WTC11 (cell line): ENCODE measurements at regions of chr7 and their contacts with region 1.

Region 1: GRCh38 chr7:132580717-132581285 is 4.5 kb upstream of the PLXNA4 start:
- DNase-seq: peak; percentile 78
- ATAC-seq: peak; percentile 71
- H3K4me3 Mint-ChIP-seq: no peak overlapping the region
- H3K27ac Mint-ChIP-seq: no peak overlapping the region
- H3K4me1 Mint-ChIP-seq: peaks cover 13% of the 10 kb centered on the region
- H3K27me3 Mint-ChIP-seq: peaks cover 39% of the 10 kb centered on the region
- CTCF ChIP-seq: peak; percentile 68

Region 2: GRCh38 chr7:132318352-132319318 is 262.2 kb before region 1 on chr7:
- CTCF ChIA-PET with region 1: interaction called, 35 read pairs
- POLR2A ChIA-PET with region 1: no interaction called
- DNase-seq: peak; percentile 87
- ATAC-seq: peak; percentile 95
- H3K4me3 Mint-ChIP-seq: peak overlapping the region; percentile 62
- H3K27ac Mint-ChIP-seq: no peak overlapping the region
- H3K4me1 Mint-ChIP-seq: peaks cover 17% of the 10 kb centered on the region
- H3K27me3 Mint-ChIP-seq: peaks cover 11% of the 10 kb centered on the region
- CTCF ChIP-seq: peak; percentile 73

Region 3: GRCh38 chr7:132422502-132423111 is 158.2 kb before region 1 on chr7:
- CTCF ChIA-PET with region 1: no interaction called
- POLR2A ChIA-PET with region 1: no interaction called
- DNase-seq: no peak
- ATAC-seq: no peak
- H3K4me3 Mint-ChIP-seq: no peak overlapping the region
- H3K27ac Mint-ChIP-seq: no peak overlapping the region
- H3K4me1 Mint-ChIP-seq: peaks cover 19% of the 10 kb centered on the region
- H3K27me3 Mint-ChIP-seq: no peaks in the 10 kb centered on the region
- CTCF ChIP-seq: no peak

Region 4: GRCh38 chr7:132475669-132476116 is 105.1 kb before region 1 on chr7:
- CTCF ChIA-PET with region 1: interaction called, 10 read pairs
- POLR2A ChIA-PET with region 1: no interaction called
- DNase-seq: no peak
- ATAC-seq: peak; percentile 67
- H3K4me3 Mint-ChIP-seq: peak overlapping the region; percentile 45
- H3K27ac Mint-ChIP-seq: no peak overlapping the region
- H3K4me1 Mint-ChIP-seq: peaks cover 47% of the 10 kb centered on the region
- H3K27me3 Mint-ChIP-seq: peaks cover 4% of the 10 kb centered on the region
- CTCF ChIP-seq: no peak

Region 5: DNA sequence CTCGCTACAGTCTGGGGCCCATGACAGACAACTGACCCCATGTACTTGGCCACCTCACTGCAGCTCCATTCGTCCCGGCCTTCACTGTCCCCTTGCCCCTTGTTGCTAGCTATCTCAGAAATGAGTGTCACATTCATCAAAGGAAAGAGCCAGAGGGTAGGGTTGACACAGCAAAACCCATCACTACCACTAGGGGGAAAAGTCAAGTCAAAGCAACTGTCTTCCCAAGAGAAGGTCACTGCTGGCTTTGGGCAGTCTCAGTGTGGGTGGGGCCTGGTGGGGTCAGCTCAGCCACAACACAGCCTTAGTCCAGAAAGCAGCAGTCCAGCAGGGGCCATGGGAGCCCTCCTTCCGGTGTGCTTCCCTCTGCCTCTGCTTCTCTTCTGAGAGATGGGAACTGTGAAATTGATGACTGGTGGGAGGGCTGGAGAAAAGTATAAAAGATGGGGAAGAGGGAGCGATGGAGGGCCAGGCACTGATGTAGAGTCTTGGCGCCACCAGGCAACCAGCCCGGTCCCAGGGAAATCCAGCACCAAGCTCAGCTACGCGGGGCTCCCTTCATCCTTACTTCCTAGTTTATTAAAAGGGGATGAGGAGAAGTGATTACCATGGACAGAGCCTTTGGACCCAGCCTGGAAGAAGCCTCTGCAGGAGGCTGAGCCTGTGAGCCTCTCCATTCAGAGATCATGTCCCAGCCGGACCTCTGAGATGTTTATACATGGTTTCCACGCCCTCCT is 62.5 kb before region 1 on chr7:
- CTCF ChIA-PET with region 1: interaction called, 27 read pairs
- POLR2A ChIA-PET with region 1: no interaction called
- DNase-seq: peak; percentile 52
- ATAC-seq: peak; percentile 97
- H3K4me3 Mint-ChIP-seq: no peak overlapping the region
- H3K27ac Mint-ChIP-seq: no peak overlapping the region
- H3K4me1 Mint-ChIP-seq: peaks cover 10% of the 10 kb centered on the region
- H3K27me3 Mint-ChIP-seq: no peaks in the 10 kb centered on the region
- CTCF ChIP-seq: peak; percentile 70

Region 6: DNA sequence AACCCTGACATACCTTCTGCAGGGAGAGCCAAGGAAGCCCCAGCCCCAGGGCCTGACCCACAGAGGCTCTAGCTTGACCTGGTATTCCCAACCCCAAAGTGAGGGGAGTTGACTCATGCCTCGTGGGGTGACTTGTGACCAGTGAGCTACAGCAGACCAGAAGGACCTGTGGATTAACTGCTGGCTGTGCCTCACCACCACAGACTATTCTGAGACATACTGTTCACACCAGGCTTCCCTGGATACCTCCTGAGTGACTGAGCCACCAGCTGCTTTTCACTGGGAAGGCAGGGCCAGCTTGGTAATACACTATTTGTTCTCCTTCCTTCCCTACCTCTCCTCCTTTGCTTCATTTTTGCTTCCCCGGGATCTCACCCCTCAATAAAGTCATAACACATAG is 11.8 kb before region 1 on chr7:
- CTCF ChIA-PET with region 1: interaction called, 12 read pairs
- POLR2A ChIA-PET with region 1: no interaction called
- DNase-seq: no peak
- ATAC-seq: no peak
- H3K4me3 Mint-ChIP-seq: no peak overlapping the region
- H3K27ac Mint-ChIP-seq: no peak overlapping the region
- H3K4me1 Mint-ChIP-seq: peaks cover 41% of the 10 kb centered on the region
- H3K27me3 Mint-ChIP-seq: peaks cover 73% of the 10 kb centered on the region
- CTCF ChIP-seq: no peak

Region 7: DNA sequence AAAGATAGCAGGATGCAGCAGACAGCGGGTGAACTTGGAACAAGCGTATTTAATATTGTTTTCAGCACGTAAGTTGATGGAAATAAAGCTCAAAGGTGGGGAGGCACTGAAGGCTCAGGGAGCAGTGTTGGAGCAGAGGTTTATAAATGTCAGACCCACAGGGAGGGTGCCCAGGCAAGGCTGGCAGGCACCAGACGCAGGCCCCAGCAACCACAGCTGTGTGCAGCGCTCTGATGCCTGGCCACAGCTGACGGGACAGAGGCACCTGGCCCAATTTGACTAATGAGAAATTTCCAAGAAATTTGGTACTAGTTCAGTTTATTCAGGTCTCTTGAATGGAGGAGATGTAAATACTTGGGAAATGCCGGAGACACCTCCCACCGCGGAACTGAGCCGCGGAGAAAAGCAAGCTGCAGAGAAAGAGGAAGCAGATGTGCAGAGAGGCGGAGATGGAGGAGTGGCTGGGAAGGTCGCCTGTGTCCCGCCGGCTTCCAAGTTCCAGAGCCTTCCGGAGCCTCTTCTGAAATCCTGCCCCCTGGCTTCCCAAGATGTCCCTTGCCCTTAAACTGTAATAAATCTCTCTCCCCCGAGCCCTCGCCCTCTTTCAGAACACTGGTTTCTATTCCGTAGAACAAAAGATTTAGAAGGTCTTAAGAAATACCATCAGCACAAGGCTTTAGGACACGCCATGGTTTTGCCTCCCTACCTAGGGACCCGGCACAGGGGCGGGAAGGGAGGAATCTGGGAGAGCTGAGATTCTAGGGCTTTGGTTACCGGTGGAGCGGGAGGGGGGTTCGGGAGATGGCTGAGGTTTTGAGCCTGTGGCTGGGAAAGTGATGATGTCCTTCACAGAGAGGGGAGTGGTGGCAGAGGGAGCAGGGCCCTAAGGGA is 33.9 kb after region 1 on chr7:
- CTCF ChIA-PET with region 1: interaction called, 14 read pairs
- POLR2A ChIA-PET with region 1: no interaction called
- DNase-seq: peak; percentile 66
- ATAC-seq: peak; percentile 87
- H3K4me3 Mint-ChIP-seq: peak overlapping the region; percentile 70
- H3K27ac Mint-ChIP-seq: 0 out of 2 replicates have a peak overlapping the region, but pooled peaks have one; percentile 37
- H3K4me1 Mint-ChIP-seq: peaks cover 34% of the 10 kb centered on the region
- H3K27me3 Mint-ChIP-seq: peaks cover 10% of the 10 kb centered on the region
- CTCF ChIP-seq: no peak

Region 8: GRCh38 chr7:132735476-132735875 is 154.7 kb after region 1 on chr7:
- CTCF ChIA-PET with region 1: no interaction called
- POLR2A ChIA-PET with region 1: no interaction called
- DNase-seq: no peak
- ATAC-seq: no peak
- H3K4me3 Mint-ChIP-seq: no peak overlapping the region
- H3K27ac Mint-ChIP-seq: no peak overlapping the region
- H3K4me1 Mint-ChIP-seq: no peaks in the 10 kb centered on the region
- H3K27me3 Mint-ChIP-seq: peaks cover 3% of the 10 kb centered on the region
- CTCF ChIP-seq: no peak